ENCODE measurements at regions of chr18 and their contacts with region 1.

Region 1: DNA sequence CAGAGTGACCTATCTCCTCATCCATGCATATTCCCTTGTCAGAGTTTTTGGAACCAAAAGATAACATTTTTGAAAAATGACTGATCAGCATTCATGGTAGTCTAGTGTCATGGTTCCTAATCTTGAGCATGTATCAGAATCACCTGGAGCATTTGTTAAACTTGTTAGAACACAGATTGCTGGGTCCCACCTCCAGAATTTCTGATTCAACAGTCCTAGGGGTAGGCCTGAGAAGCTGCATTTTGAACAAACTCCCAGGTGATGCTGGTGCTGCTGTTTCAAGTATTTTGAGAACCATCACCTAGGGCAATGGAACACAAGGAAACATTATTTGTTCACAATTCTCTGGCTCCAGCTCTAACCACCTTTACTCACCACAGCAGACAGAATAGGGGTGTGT is 21.0 kb downstream of the TMEM200C start:
- DNase-seq: no peak
- ATAC-seq: no peak
- H3K4me3 ChIP-seq: no peak overlapping the region
- H3K27ac ChIP-seq: no peak overlapping the region
- H3K4me1 ChIP-seq: no peaks in the 10 kb centered on the region
- H3K27me3 ChIP-seq: peaks cover 0 to 61% (median 20%) of the 10 kb centered on the region in 7 donors
- CTCF ChIP-seq: no peak

Region 2: GRCh38 chr18:6219116-6219717 is 344.9 kb after region 1 on chr18:
- intact Hi-C with region 1: loop called in 6 of 10 experiments (anchors 2 to 10 kb)
- DNase-seq: peak; percentile 12 to 15
- ATAC-seq: peak in 6 of 8 donors; percentile 43 to 80 (median 64)
- H3K4me3 ChIP-seq: no peak overlapping the region
- H3K27ac ChIP-seq: no peak overlapping the region
- H3K4me1 ChIP-seq: no peaks in the 10 kb centered on the region
- H3K27me3 ChIP-seq: no peaks in the 10 kb centered on the region
- CTCF ChIP-seq: peak; percentile 38 to 74 (median 66)

Measured in heart right ventricle (tissue), 16 donors.